ENCODE measurements at regions of chr10 and their contacts with region 1.

Region 1: DNA sequence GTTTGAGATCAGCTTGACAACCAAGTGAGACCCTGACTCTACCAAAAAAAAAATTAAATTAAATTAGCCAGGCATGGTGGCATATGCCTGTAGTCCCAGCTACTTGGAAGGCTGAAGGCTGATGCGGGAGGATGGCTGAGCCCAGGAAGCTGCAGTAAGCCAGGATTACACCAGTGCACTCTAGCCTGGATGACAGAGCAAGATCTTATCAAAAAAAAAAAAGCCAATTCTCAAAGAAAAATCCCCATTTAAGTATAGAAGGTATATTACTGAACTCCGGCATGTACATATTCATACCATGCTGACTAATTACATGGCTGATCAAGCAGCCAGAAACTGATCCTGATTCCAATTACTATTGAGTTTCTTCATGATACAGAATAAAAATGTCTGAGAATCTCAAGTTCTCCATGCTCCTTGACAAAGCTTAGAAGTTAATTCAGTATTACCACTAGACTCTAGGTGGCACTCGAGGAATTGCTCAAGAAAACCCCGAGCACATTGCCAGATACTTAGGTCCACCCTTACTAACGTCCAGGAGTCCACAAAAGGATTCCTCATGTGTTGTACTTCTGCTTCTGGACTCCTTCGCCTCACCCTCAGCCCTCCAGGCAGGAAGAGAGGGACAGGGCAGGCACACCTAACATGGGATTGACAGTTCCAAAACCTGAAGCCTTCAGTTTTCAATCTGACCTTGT is 148.9 kb downstream of the PARD3 start:
- DNase-seq: peak; percentile 83
- H3K4me3 ChIP-seq: no peak overlapping the region
- H3K27ac ChIP-seq: peak overlapping the region in 1 of 4 donors; percentile 22
- H3K4me1 ChIP-seq: peaks cover 0 to 31% (median 9%) of the 10 kb centered on the region in 4 donors
- H3K27me3 ChIP-seq: no peaks in the 10 kb centered on the region
- CTCF ChIP-seq: peak; percentile 44 to 57 (median 50)
- EP300 ChIP-seq: no peak
- POLR2A ChIP-seq: no peak

Region 2: DNA sequence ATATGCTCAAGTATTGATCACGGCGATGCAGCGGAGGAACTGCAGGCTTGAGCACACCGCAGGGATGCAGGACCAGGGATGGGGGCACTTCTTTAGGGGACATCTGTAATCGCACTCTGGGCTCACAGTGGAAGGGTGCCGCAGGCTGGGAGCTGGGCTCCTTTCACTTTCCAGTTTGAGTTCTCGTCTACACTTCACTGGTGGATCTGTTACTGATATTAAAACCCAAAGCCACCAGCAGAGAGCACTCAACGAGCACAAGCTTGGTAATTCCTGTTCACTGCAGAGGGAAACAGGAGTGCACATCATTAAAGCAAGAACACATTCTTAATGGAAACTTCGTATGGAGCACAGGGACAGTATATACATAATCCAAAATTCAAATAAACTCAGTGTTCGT is 57.6 kb after region 1 on chr10:
- intact Hi-C with region 1: loop called (anchors 5 kb)
- DNase-seq: no peak
- H3K4me3 ChIP-seq: no peak overlapping the region
- H3K27ac ChIP-seq: peak overlapping the region in 3 of 4 donors; percentile 48 to 54 (median 50)
- H3K4me1 ChIP-seq: peaks cover 0 to 65% (median 46%) of the 10 kb centered on the region in 4 donors
- H3K27me3 ChIP-seq: no peaks in the 10 kb centered on the region
- CTCF ChIP-seq: peak in 3 of 4 experiments; percentile 51 to 66 (median 61)
- EP300 ChIP-seq: no peak
- POLR2A ChIP-seq: no peak

Region 3: DNA sequence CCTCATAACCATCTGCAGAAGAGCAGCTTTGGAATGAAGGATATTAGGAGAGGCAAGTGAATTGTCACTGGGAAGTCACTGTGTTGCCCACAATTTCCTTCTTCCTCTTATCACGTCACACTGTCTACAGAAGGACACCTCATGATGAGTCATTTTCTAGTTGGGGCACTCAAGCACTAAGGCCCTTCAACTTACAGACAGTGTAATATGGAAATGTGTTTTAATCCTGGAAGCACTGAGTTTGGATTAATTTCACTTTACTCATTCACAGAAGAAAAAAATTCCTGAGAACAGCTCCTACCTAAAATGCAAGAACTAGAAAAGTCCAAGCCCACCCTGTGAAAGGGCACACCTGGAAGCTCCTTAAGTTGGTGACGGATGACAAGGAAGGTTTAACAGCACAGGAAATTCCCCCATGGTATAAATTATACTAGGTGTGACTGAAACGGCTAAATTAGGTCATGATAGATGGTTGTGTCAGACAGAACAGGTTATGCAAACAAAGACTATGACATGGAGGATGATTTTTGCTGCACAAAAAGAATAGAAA is 92.4 kb after region 1 on chr10:
- intact Hi-C with region 1: no loop called
- DNase-seq: no peak
- H3K4me3 ChIP-seq: no peak overlapping the region
- H3K27ac ChIP-seq: peak overlapping the region in 3 of 4 donors; percentile 19 to 42 (median 24)
- H3K4me1 ChIP-seq: peaks cover 0 to 70% (median 52%) of the 10 kb centered on the region in 4 donors
- H3K27me3 ChIP-seq: no peaks in the 10 kb centered on the region
- CTCF ChIP-seq: no peak
- EP300 ChIP-seq: no peak
- POLR2A ChIP-seq: no peak

Region 4: GRCh38 chr10:34815185-34816084 is 149.3 kb after region 1 on chr10 and contains the start of gene PARD3:
- intact Hi-C with region 1: loop called (anchors 5 kb)
- DNase-seq: peak; percentile 87
- H3K4me3 ChIP-seq: peak within 1 kb of the TSS; percentile 65 to 91 (median 88)
- H3K27ac ChIP-seq: peak within 1 kb of the TSS; percentile 85 to 95 (median 92)
- H3K4me1 ChIP-seq: peaks cover 0 to 46% (median 31%) of the 10 kb centered on the region in 4 donors
- H3K27me3 ChIP-seq: no peaks in the 10 kb centered on the region
- CTCF ChIP-seq: no peak
- EP300 ChIP-seq: no peak
- POLR2A ChIP-seq: no peak
- total RNA-seq, gene PARD3: 75.9 to 96.4 (median 83.7) TPM

Region 5: GRCh38 chr10:34985823-34986222 is 319.7 kb after region 1 on chr10:
- intact Hi-C with region 1: loop called (anchors 10 kb)
- DNase-seq: no peak
- H3K4me3 ChIP-seq: no peak overlapping the region
- H3K27ac ChIP-seq: no peak overlapping the region
- H3K4me1 ChIP-seq: no peaks in the 10 kb centered on the region
- H3K27me3 ChIP-seq: no peaks in the 10 kb centered on the region
- CTCF ChIP-seq: peak in 1 of 4 experiments; percentile 35
- EP300 ChIP-seq: no peak
- POLR2A ChIP-seq: no peak

Region 6: DNA sequence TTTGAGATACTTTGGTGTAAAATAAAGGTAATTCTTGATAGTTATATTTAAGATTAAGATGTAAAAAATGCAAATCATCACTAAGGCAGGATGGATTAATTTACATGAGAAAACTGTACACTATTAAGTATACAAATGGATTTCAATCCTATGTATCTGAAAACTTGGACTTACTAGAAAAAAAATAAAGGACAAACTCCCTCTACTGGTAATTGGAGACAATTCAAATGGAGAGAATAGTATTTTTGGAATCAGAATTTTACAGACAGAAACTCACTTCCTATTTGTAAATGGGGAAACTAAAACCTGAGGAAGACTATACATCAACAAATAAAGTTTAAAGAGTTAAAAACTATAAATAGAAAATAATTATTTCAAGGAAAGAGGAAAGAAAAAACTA is 361.4 kb after region 1 on chr10:
- intact Hi-C with region 1: loop called (anchors 5 kb)
- DNase-seq: no peak
- H3K4me3 ChIP-seq: no peak overlapping the region
- H3K27ac ChIP-seq: no peak overlapping the region
- H3K4me1 ChIP-seq: no peaks in the 10 kb centered on the region
- H3K27me3 ChIP-seq: no peaks in the 10 kb centered on the region
- CTCF ChIP-seq: peak in 3 of 4 experiments; percentile 11 to 38 (median 30)
- EP300 ChIP-seq: no peak
- POLR2A ChIP-seq: no peak